Ascending aorta (tissue), 2 donors: ENCODE measurements at regions of chr12 and their contacts with region 1.

Region 1: GRCh38 chr12:101570047-101570446 is 24.7 kb upstream of the MYBPC1 start:
- DNase-seq: no peak
- H3K4me3 ChIP-seq: no peak overlapping the region
- H3K27ac ChIP-seq: no peak overlapping the region
- H3K4me1 ChIP-seq: no peaks in the 10 kb centered on the region
- H3K27me3 ChIP-seq: no peaks in the 10 kb centered on the region
- CTCF ChIP-seq: peak in 2 of 3 experiments; percentile 12 to 19

Region 2: GRCh38 chr12:101604132-101604531 is 34.1 kb after region 1 on chr12:
- intact Hi-C with region 1: no loop called
- DNase-seq: no peak
- H3K4me3 ChIP-seq: no peak overlapping the region
- H3K27ac ChIP-seq: no peak overlapping the region
- H3K4me1 ChIP-seq: no peaks in the 10 kb centered on the region
- H3K27me3 ChIP-seq: no peaks in the 10 kb centered on the region
- CTCF ChIP-seq: no peak

Region 3: GRCh38 chr12:101616027-101616494 is 46.0 kb after region 1 on chr12:
- intact Hi-C with region 1: loop called (anchors 2 kb)
- DNase-seq: no peak
- H3K4me3 ChIP-seq: no peak overlapping the region
- H3K27ac ChIP-seq: peak overlapping the region; percentile 23 to 57
- H3K4me1 ChIP-seq: peaks cover 0 to 31% of the 10 kb centered on the region in 2 donors
- H3K27me3 ChIP-seq: no peaks in the 10 kb centered on the region
- CTCF ChIP-seq: no peak

Region 4: GRCh38 chr12:101747697-101748096 is 177.7 kb after region 1 on chr12:
- intact Hi-C with region 1: loop called (anchors 5 kb)
- DNase-seq: no peak
- H3K4me3 ChIP-seq: no peak overlapping the region
- H3K27ac ChIP-seq: no peak overlapping the region
- H3K4me1 ChIP-seq: no peaks in the 10 kb centered on the region
- H3K27me3 ChIP-seq: no peaks in the 10 kb centered on the region
- CTCF ChIP-seq: no peak

Region 5: DNA sequence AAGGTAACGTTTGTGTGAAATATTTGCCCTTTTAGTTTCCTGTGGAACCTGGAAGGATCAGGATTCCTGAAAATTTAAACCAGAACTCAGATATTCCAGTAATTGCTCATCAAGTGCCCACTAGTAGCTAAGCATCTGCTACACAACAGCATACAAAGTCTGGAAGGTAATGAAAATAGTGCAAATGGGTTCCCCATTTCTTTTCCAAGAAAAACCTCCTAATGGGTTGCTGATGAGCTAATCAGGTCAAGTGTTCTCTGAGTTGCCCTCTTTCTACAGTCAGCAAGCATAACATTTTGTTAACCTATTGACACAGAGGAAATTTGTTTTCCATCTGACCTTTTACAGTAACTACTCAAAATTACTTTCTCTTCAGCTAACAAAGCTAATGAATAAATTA is 711.2 kb after region 1 on chr12:
- intact Hi-C with region 1: no loop called
- DNase-seq: no peak
- H3K4me3 ChIP-seq: no peak overlapping the region
- H3K27ac ChIP-seq: no peak overlapping the region
- H3K4me1 ChIP-seq: no peaks in the 10 kb centered on the region
- H3K27me3 ChIP-seq: no peaks in the 10 kb centered on the region
- CTCF ChIP-seq: no peak